ENCODE measurements at regions of chr12 and their contacts with region 1.

Region 1: GRCh38 chr12:121590476-121591143 is 9.8 kb upstream of the KDM2B start:
- DNase-seq: peak; percentile 50 to 91 (median 61)
- ATAC-seq: peak; percentile 70
- H3K4me3 ChIP-seq: peak overlapping the region; percentile 52
- H3K4me3 Mint-ChIP-seq: peak overlapping the region; percentile 92
- H3K27ac ChIP-seq: peak overlapping the region; percentile 86 to 94
- H3K27ac Mint-ChIP-seq: peak overlapping the region; percentile 99
- H3K4me1 ChIP-seq: peaks cover 45% of the 10 kb centered on the region
- H3K4me1 Mint-ChIP-seq: peaks cover 40% of the 10 kb centered on the region
- H3K27me3 ChIP-seq: no peaks in the 10 kb centered on the region
- H3K27me3 Mint-ChIP-seq: no peaks in the 10 kb centered on the region
- CTCF ChIP-seq: no peak

Region 2: GRCh38 chr12:121536899-121537813 is 53.5 kb before region 1 on chr12:
- CTCF ChIA-PET with region 1: no interaction called
- POLR2A ChIA-PET with region 1: interaction called, 12 read pairs
- intact Hi-C with region 1: loop called in 1 of 2 experiments (anchors 2 kb)
- DNase-seq: peak in 13 of 14 experiments; percentile 16 to 84 (median 37)
- ATAC-seq: peak; percentile 10
- H3K4me3 ChIP-seq: peak overlapping the region; percentile 58
- H3K4me3 Mint-ChIP-seq: peak overlapping the region; percentile 94
- H3K27ac ChIP-seq: peak overlapping the region; percentile 67 to 80
- H3K27ac Mint-ChIP-seq: peak overlapping the region; percentile 93
- H3K4me1 ChIP-seq: peaks cover 60% of the 10 kb centered on the region
- H3K4me1 Mint-ChIP-seq: peaks cover 44% of the 10 kb centered on the region
- H3K27me3 ChIP-seq: no peaks in the 10 kb centered on the region
- H3K27me3 Mint-ChIP-seq: no peaks in the 10 kb centered on the region
- CTCF ChIP-seq: no peak

Region 3: GRCh38 chr12:121697098-121697698 is 106.6 kb after region 1 on chr12:
- CTCF ChIA-PET with region 1: no interaction called
- POLR2A ChIA-PET with region 1: no interaction called
- intact Hi-C with region 1: no loop called
- DNase-seq: peak in 4 of 14 experiments; percentile 55 to 79 (median 78)
- ATAC-seq: peak; percentile 32
- H3K4me3 ChIP-seq: no peak overlapping the region
- H3K4me3 Mint-ChIP-seq: no peak overlapping the region
- H3K27ac ChIP-seq: no peak overlapping the region
- H3K27ac Mint-ChIP-seq: no peak overlapping the region
- H3K4me1 ChIP-seq: peaks cover 2% of the 10 kb centered on the region
- H3K4me1 Mint-ChIP-seq: peaks cover 4% of the 10 kb centered on the region
- H3K27me3 ChIP-seq: no peaks in the 10 kb centered on the region
- H3K27me3 Mint-ChIP-seq: no peaks in the 10 kb centered on the region
- CTCF ChIP-seq: peak; percentile 81

Region 4: DNA sequence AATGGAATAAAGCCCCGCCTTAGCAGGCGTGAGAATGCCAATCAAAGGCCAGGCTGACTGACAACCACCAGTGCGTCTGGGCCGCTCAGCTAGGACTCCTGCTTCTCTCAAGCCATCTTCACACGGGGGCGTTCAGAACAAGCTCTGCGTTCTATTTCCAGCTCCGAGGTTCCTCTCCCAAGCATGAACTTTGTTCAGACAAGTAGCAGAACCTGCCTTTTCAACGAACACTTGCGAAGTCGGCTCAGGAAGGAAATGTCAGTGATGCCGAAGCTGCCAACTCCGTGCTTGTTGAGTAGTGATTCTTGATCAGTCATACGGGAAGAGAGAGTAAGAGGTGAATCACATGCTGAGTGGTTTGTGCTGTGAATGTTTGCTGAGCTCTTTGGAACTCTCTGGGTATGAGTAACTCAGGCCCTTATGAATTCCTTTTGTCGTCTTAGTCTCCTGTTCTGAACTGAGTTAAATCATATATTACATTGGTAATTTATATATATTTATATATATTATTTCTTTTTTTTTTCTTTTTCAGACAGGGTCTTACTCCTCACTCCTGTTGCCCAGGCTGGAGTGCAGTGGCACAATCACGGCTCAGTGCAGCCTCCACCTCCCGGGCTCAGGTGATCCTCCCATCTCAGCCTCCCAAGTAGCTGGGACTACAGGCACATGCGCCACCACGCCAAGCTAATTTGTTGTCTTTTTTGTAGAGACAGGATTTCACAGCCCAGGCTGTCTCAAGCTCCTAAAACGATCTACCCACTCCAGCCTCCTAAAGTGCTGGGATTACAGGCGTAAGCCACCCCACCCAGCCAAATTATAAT is 401.7 kb after region 1 on chr12:
- CTCF ChIA-PET with region 1: no interaction called
- POLR2A ChIA-PET with region 1: no interaction called
- intact Hi-C with region 1: no loop called
- DNase-seq: peak in 11 of 14 experiments; percentile 14 to 64 (median 39)
- ATAC-seq: peak; percentile 89
- H3K4me3 ChIP-seq: no peak overlapping the region
- H3K4me3 Mint-ChIP-seq: no peak overlapping the region
- H3K27ac ChIP-seq: no peak overlapping the region
- H3K27ac Mint-ChIP-seq: peak overlapping the region; percentile 45
- H3K4me1 ChIP-seq: peaks cover 10% of the 10 kb centered on the region
- H3K4me1 Mint-ChIP-seq: peaks cover 5% of the 10 kb centered on the region
- H3K27me3 ChIP-seq: no peaks in the 10 kb centered on the region
- H3K27me3 Mint-ChIP-seq: no peaks in the 10 kb centered on the region
- CTCF ChIP-seq: no peak

Region 5: DNA sequence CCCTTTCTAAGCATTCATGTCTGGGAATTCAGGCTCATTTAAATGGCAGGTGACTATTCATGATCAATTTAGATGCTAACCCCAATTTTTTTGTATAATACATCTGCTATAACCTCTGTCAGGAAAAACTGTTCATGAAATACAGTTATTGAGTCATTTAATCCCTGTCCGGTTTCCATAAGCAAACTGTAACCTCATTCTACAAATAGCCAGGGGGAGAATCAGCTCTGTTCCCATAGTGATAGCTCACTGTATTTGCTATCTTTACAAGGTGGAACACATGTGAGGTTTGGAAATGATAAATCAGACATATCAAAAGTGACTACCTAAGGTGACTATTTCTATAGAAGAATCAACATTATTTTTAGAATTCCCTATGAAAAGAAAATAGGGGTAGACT is 714.3 kb after region 1 on chr12:
- CTCF ChIA-PET with region 1: no interaction called
- POLR2A ChIA-PET with region 1: no interaction called
- intact Hi-C with region 1: loop called in 1 of 2 experiments (anchors 5 kb)
- DNase-seq: no peak
- ATAC-seq: no peak
- H3K4me3 ChIP-seq: no peak overlapping the region
- H3K4me3 Mint-ChIP-seq: no peak overlapping the region
- H3K27ac ChIP-seq: no peak overlapping the region
- H3K27ac Mint-ChIP-seq: no peak overlapping the region
- H3K4me1 ChIP-seq: no peaks in the 10 kb centered on the region
- H3K4me1 Mint-ChIP-seq: no peaks in the 10 kb centered on the region
- H3K27me3 ChIP-seq: no peaks in the 10 kb centered on the region
- H3K27me3 Mint-ChIP-seq: no peaks in the 10 kb centered on the region
- CTCF ChIP-seq: no peak